ENCODE measurements at regions of chr17 and their contacts with region 1.

Region 1: DNA sequence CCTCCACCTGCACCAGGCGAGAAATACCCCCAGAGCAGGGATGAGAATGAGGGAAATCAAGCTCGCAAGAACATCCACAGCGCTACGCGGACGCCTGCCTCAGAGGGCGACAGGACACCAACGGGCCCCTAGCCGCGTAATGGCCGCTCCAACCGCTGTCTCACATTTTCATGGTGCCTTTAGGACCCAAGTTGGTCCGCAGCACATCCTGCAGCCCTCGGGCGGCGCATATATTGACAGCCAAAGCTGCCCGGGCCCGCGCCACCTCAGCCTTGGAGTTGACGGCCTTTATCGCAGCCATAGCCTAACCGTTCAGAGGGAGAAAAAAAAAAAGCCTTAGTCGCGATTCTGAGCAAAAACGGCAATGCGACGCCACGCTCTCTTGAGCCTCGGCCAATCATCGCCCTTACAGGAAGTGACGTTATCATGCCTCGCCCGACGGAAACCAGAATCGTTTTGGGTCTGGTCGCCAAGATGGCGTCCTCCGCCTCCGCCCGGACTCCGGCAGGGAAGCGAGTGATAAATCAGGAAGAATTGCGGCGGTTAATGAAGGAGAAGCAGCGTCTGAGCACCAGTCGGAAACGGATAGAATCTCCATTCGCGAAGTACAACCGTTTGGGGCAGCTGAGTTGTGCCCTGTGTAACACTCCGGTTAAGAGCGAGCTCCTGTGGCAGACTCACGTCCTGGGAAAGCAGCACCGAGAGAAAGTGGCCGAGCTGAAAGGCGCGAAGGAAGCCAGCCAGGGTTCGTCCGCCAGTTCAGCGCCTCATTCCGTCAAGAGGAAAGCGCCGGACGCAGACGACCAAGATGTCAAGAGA is at the starts of genes CCT6B and ZNF830:
- DNase-seq: peak; percentile 91 to 96 (median 93)
- ATAC-seq: peak; percentile 96
- H3K4me3 ChIP-seq: peak within 1 kb of the TSS; percentile 79
- H3K27ac ChIP-seq: peak within 1 kb of the TSS; percentile 96
- H3K4me1 ChIP-seq: no peaks in the 10 kb centered on the region
- H3K27me3 ChIP-seq: no peaks in the 10 kb centered on the region
- CTCF ChIP-seq: no peak
- EP300 ChIP-seq: peak; percentile 14; the same call in 1 of the 2 replicates
- POLR2A ChIP-seq: peak; percentile 97
- RAD21 ChIP-seq: no peak
- polyA plus RNA-seq, gene CCT6B: 0.25 to 0.83 TPM
- polyA plus RNA-seq, gene ZNF830: 13.1 to 18.8 TPM

Region 2: GRCh38 chr17:34974794-34975785 is 13.8 kb after region 1 on chr17:
- CTCF ChIA-PET with region 1: no interaction called
- POLR2A ChIA-PET with region 1: interaction called, 13 read pairs
- in situ Hi-C with region 1: no loop called
- intact Hi-C with region 1: loop called (anchors 2 kb)
- DNase-seq: no peak
- ATAC-seq: no peak
- H3K4me3 ChIP-seq: no peak overlapping the region
- H3K27ac ChIP-seq: no peak overlapping the region
- H3K4me1 ChIP-seq: peaks cover under 1 to 11% of the 10 kb centered on the region in 2 experiments; a peak in 3 of 5 replicates
- H3K27me3 ChIP-seq: no peaks in the 10 kb centered on the region
- CTCF ChIP-seq: no peak
- EP300 ChIP-seq: no peak
- POLR2A ChIP-seq: no peak
- RAD21 ChIP-seq: no peak

Region 3: GRCh38 chr17:35063514-35064223 is 102.4 kb after region 1 on chr17 and contains the start of gene RFFL:
- CTCF ChIA-PET with region 1: no interaction called
- POLR2A ChIA-PET with region 1: no interaction called
- in situ Hi-C with region 1: no loop called
- intact Hi-C with region 1: no loop called
- DNase-seq: peak; percentile 82 to 90 (median 83)
- ATAC-seq: peak; percentile 92
- H3K4me3 ChIP-seq: no peak within 1 kb of the TSS; the same call in 1 of the 2 replicates
- H3K27ac ChIP-seq: peak within 1 kb of the TSS; percentile 82
- H3K4me1 ChIP-seq: peaks cover 31 to 41% of the 10 kb centered on the region in 2 experiments
- H3K27me3 ChIP-seq: no peaks in the 10 kb centered on the region
- CTCF ChIP-seq: peak; percentile 13 to 66 (median 51); a peak in 3 of 6 replicates
- EP300 ChIP-seq: peak; percentile 47; the same call in 1 of the 2 replicates
- POLR2A ChIP-seq: peak; percentile 44; the same call in 1 of the 2 replicates
- RAD21 ChIP-seq: peak; percentile 53 to 68
- polyA plus RNA-seq, gene RFFL: 3.4 to 3.7 TPM

Measured in K562 (cell line).